ENCODE measurements at regions of chr17 and their contacts with region 1.

Region 1: DNA sequence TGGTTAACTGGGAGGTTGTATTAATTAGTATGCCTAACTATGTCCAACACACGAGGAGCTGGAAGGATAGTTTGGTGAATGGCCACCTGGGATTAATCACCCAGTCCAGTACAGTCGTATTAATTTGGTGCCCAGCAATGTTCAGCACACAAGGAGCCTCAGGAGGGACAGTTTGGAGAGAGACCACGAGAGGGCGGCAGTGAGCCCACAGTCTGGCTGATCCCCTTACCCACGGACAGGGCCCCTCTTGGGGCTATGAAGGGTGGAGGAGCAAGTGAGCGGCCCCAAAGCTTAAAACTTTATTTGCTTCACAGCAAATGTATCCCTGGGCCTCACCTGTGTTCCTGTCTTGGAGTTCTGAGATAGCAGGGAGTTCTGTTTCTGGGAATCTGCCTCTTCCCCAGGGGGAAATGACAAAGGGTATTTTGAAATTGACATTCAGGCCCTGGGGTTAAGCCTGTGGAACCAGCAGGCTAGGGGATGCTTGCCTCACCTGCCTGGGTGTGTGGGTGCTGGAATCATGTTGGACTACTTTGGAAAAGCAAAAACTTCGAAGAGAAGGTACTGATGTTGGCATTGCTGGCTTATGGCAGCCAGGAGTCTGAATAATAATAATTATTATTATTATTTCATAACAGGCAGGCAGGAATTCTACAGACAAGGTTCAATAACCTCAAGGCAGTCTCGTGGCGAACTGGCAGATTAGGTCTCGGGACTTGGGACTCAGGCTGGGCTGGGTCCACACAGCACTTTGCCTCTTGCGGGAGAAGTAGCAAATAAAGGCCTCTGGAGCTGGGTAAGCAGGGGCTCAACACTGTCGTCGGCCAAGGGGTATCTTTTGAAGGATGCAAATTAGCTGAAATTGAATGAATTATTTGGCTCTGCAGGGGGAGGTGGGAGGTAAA is 227.6 kb upstream of the ASIC2 start:
- DNase-seq: peak; percentile 65
- H3K4me3 Mint-ChIP-seq: no peak overlapping the region
- H3K27ac Mint-ChIP-seq: no peak overlapping the region
- H3K4me1 Mint-ChIP-seq: no peaks in the 10 kb centered on the region
- H3K27me3 Mint-ChIP-seq: peaks cover 2% of the 10 kb centered on the region

Region 2: GRCh38 chr17:33674685-33675084 is 154.0 kb after region 1 on chr17:
- CTCF ChIA-PET with region 1: interaction called, 6 read pairs
- intact Hi-C with region 1: loop called (anchors 1 kb)
- DNase-seq: peak; percentile 68
- H3K4me3 Mint-ChIP-seq: no peak overlapping the region
- H3K27ac Mint-ChIP-seq: no peak overlapping the region
- H3K4me1 Mint-ChIP-seq: no peaks in the 10 kb centered on the region
- H3K27me3 Mint-ChIP-seq: peaks cover 6% of the 10 kb centered on the region

Region 3: GRCh38 chr17:33750943-33751701 is 230.4 kb after region 1 on chr17:
- CTCF ChIA-PET with region 1: interaction called, 7 read pairs
- intact Hi-C with region 1: loop called (anchors 1 kb)
- DNase-seq: peak; percentile 81
- H3K4me3 Mint-ChIP-seq: no peak overlapping the region
- H3K27ac Mint-ChIP-seq: no peak overlapping the region
- H3K4me1 Mint-ChIP-seq: peaks cover 4% of the 10 kb centered on the region
- H3K27me3 Mint-ChIP-seq: peaks cover 44% of the 10 kb centered on the region

Region 4: DNA sequence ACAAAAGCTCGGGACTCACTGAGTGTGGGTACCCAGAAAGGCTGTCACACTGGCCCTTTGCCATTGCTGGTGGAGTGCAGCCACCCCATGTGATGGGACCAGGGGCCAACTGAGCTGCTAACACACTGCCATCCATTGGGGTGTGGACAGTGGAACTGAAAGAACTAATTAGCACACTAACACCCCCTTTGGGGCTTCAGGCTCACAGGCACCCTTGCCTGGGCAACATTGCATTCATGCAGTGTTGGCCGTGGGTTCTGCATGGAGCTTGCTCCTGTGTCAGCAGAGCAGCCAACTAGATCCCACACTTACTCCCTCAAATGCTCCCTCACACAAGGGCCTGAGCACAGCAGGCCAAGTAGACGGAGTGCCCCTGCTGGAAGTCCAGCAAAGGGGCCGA is 248.4 kb after region 1 on chr17:
- CTCF ChIA-PET with region 1: no interaction called
- intact Hi-C with region 1: no loop called
- DNase-seq: no peak
- H3K4me3 Mint-ChIP-seq: no peak overlapping the region
- H3K27ac Mint-ChIP-seq: no peak overlapping the region
- H3K4me1 Mint-ChIP-seq: no peaks in the 10 kb centered on the region
- H3K27me3 Mint-ChIP-seq: peaks cover 20% of the 10 kb centered on the region

Measured in activated naive CD4-positive, alpha-beta T cell treated with anti-CD3 and anti-CD28 coated beads for 36 hours (primary cell).